ENCODE measurements at regions of chr22 and their contacts with region 1.

Region 1: DNA sequence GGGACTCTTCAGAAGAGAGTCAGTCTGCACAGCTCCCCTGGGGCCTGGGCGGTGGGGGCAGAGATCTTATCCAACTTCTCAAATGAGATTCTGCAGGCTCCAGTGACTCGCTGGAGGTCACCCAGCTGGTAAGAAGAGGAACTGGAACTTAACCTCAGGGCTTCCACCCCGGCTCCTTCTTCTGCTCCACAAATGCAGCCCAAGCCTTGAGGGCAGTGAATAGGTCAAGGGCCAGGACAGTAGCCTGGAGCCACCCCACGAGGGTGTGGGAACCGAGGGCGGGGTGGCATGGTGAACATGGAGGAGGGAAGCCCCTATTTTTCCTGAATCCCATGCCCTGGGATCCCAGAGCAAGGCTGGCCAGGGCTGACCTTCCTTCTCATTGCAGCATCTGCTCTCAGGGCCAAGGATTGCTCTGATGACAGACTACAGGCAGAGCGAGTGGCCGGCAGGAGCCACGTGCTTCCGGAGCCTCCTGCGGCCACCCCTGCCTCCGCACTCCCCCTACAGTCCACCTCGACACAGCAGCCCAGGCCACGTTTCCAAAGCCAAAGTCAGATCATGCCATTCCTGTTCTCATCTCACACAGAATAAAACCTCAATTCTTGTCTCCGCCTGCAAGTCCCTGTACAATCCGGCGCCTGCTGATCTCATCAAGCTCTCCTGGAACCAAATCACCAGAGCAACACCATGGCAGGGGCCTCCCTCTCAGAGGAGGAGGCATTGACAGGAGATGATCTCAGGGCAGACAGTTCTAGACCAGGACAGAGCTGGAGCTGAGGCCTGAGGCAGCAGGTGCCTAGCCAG is 21.1 kb upstream of the UPK3A start:
- DNase-seq: peak; percentile 80
- CTCF ChIP-seq: peak; percentile 92

Region 2: DNA sequence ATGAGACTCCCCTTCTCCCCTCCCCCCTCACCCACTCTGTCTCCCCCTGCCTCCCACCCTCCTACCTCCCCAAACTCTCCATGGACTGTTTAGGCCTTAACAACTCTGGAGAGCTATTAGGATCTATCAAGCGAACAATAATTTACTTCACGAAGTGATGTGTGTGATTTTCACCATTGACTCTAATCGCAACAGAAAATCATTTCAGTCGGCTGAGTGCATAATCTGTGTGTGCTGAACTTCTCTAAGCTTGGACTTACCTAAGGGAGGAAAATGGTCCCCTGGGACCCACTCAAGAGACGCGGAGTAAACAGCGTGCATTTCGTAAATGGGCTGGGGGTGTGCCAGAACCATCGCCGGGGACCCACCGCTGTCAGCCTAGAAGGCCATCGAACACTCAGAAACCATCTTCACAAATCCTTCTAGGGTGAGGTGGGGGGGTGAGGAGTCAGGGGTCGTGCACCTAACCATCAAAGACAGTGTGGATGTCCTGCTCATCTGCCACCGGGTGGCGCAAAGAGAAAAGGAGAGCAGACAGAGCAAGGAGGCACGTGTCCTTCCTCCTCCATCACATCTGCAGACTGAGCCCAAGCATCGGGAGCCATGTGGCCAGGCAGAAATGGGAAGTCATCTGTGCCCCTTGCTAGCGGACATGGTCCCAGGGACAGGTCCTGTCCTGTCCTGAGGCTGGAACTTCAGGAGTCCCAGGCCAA is 162.0 kb before region 1 on chr22:
- CTCF ChIA-PET with region 1: interaction called, 27 read pairs
- POLR2A ChIA-PET with region 1: no interaction called
- DNase-seq: peak; percentile 67
- CTCF ChIP-seq: peak; percentile 74

Region 3: GRCh38 chr22:45246060-45246985 is 17.3 kb before region 1 on chr22:
- CTCF ChIA-PET with region 1: interaction called, 10 read pairs
- POLR2A ChIA-PET with region 1: no interaction called
- DNase-seq: no peak
- CTCF ChIP-seq: no peak

Measured in GM10248 (cell line).